ENCODE measurements at regions of chr4 and their contacts with region 1.

Region 1: DNA sequence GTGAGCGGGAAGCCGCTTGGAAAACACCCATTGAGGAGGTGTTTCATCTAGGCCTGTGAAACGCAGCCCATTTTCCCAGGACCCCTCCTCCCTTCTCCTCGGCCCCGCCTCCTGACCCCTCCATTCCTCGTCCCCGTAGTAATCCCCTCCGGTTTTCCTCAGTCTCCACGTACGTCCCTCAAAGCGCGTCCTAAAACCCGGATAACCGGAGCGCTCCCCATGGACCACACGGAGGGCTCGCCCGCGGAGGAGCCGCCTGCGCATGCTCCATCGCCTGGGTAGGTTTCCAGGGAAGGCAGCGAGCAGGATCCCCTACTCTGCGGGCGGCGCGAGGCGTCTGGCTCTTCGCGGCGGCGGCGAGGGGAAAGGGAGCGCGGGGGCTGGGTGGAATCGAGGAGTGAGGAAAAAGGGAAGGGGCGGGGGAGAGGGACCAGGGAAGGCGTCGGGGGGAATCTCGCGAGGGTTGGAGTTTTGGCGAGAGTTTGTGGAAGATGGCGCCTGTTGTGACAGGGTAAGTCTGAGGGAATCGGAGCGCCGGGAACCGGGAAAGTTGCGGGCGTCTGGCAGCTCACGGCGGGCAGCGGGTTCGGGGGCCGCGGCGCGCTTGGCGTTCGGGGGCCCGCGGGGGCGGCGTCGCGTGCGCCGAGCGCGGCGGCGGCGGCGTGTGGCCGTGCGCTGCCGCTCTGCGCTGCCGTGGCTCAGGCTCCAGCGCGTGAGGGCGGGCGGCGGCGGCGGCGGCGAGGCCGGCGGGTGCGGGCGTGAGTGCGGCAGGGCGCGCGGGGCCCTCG is at the start of gene RBPJ:
- DNase-seq: peak; percentile 92 to 96 (median 96)
- ATAC-seq: peak; percentile 87 to 91
- H3K4me3 ChIP-seq: peak within 1 kb of the TSS; percentile 98
- H3K27ac ChIP-seq: peak within 1 kb of the TSS; percentile 95
- H3K4me1 ChIP-seq: no peaks in the 10 kb centered on the region
- H3K27me3 ChIP-seq: no peaks in the 10 kb centered on the region
- total RNA-seq, gene RBPJ: 42.1 to 45.9 (median 44.2) TPM

Region 2: DNA sequence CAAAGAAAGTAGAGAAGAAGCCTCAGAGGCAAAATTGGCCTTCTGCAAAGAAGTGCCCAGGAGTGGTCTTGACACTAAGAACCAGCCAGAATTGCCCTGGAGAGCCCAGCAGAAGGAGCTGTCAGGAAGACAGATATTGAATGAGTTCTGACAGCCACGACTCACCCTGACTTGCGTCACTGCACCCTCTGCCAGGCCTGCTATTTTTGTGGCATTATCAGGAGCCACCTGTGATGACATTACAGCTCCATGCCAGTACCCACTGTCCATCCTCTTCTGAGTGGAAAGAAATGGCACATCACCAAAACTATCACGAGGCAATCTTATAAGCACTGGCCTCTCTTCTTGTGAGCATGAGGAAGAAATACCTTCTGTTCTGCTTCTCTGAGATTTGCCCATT is 339.0 kb before region 1 on chr4:
- intact Hi-C with region 1: loop called in 1 of 4 experiments (anchors 5 kb)
- DNase-seq: peak; percentile 59 to 73 (median 73)
- ATAC-seq: peak; percentile 90 to 94
- H3K4me3 ChIP-seq: no peak overlapping the region
- H3K27ac ChIP-seq: peak overlapping the region; percentile 72
- H3K4me1 ChIP-seq: no peaks in the 10 kb centered on the region
- H3K27me3 ChIP-seq: no peaks in the 10 kb centered on the region

Region 3: GRCh38 chr4:26081795-26082498 is 238.8 kb before region 1 on chr4:
- intact Hi-C with region 1: loop called in 2 of 4 experiments (anchors 10 kb)
- DNase-seq: no peak
- ATAC-seq: peak; percentile 49 to 77
- H3K4me3 ChIP-seq: no peak overlapping the region
- H3K27ac ChIP-seq: no peak overlapping the region
- H3K4me1 ChIP-seq: peaks cover 4% of the 10 kb centered on the region
- H3K27me3 ChIP-seq: no peaks in the 10 kb centered on the region

Region 4: GRCh38 chr4:26441102-26441501 is 120.4 kb after region 1 on chr4:
- intact Hi-C with region 1: no loop called
- DNase-seq: no peak
- ATAC-seq: no peak
- H3K4me3 ChIP-seq: no peak overlapping the region
- H3K27ac ChIP-seq: no peak overlapping the region
- H3K4me1 ChIP-seq: no peaks in the 10 kb centered on the region
- H3K27me3 ChIP-seq: no peaks in the 10 kb centered on the region

Measured in right cardiac atrium (tissue), 5 donors.